Posterior cingulate gyrus (tissue), 11 donors: ENCODE measurements at regions of chr1 and their contacts with region 1.

Region 1: GRCh38 chr1:100351095-100351891 is 1.0 kb upstream of the CDC14A start:
- DNase-seq: peak; percentile 49 to 91 (median 70)

Region 2: DNA sequence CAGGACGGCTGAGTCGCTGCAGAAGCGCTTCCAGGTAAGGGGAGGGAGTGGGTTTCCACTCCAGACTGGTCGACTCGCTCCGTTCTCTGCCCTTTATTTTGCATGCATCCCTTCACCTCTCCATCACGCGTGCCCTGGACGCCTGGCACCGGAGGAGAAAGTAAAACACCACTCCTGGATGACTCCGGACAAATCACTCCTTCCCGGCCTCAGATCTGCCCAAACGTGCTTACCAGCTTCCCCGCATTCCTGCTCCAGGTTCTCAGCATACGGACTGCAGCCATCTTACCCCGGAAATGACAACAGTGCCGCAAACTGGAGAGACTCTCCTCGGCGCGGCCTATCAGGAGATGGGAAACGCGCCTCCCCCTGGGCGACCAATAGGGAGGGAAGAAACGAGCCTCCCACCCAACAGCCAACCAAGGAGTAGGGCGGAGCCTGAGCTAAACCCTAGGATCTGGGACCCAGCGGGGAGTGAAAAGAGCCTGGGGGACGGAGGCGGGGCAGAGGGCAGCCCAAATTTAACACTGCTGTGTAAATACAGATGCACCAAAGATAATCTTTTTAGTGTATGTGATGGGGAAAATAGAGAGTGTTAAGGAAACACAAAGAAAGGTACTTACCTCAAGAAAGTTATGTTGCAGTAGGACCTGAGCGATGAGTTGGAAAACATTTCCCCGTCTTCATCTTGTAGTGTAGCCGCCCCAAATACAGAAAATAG is 101.6 kb before region 1 on chr1 and contains the start of gene DBT:
- intact Hi-C with region 1: loop called (anchors 2 kb)
- DNase-seq: peak; percentile 95 to 99 (median 97)

Region 3: GRCh38 chr1:100265931-100266740 is 85.2 kb before region 1 on chr1 and contains the start of gene RTCA:
- intact Hi-C with region 1: loop called (anchors 5 kb)
- DNase-seq: peak; percentile 93 to 99 (median 96)

Region 4: GRCh38 chr1:100459358-100460114 is 108.2 kb after region 1 on chr1:
- intact Hi-C with region 1: loop called (anchors 2 kb)
- DNase-seq: peak; percentile 45 to 94 (median 74)